Activated CD4-positive, alpha-beta memory T cell treated with anti-CD3 and anti-CD28 coated beads for 36 hours (primary cell): ENCODE measurements at regions of chr22 and their contacts with region 1.

Region 1: DNA sequence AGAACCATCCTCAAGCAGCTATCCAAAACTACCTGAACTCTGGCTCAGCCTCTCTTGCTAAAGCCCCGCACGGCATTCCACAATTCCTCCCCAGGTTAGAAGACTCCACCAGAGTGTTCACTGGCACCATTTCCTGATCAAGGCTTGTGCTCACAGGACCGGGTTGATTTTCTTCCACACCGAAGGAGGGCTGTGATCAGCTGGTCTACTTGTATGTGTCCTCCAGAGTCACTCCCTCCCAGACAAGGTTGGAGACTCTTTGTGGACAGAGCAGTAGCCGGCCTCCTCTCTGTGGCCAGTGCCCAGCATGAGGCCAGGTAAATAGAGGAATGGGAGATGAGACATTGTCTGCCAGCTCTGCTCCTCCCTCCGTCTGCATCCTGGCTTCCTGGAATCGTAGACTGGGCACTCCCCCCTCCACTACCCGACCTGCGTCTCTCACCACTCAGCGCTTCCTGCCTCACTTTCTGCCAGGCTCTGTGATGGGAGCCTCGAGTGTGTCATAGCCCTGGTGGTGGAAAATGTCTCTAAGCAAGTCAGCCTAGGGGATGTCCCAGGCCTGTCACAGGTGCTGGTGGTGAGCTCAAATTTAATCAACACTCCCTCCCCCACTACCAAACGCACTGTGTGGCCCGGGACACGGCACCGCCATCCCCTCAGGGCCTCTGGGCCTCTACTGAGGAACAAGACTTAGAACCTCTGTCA is 12.5 kb upstream of the TMPRSS6 start:
- DNase-seq: peak; percentile 97
- H3K4me3 Mint-ChIP-seq: peak overlapping the region; percentile 88
- H3K27ac Mint-ChIP-seq: peak overlapping the region; percentile 100
- H3K4me1 Mint-ChIP-seq: peaks cover 81% of the 10 kb centered on the region
- H3K27me3 Mint-ChIP-seq: no peaks in the 10 kb centered on the region

Region 2: GRCh38 chr22:37043828-37044538 is 78.1 kb before region 1 on chr22:
- CTCF ChIA-PET with region 1: interaction called, 16 read pairs
- POLR2A ChIA-PET with region 1: interaction called, 3 read pairs
- intact Hi-C with region 1: no loop called
- DNase-seq: peak; percentile 75
- H3K4me3 Mint-ChIP-seq: no peak overlapping the region
- H3K27ac Mint-ChIP-seq: no peak overlapping the region
- H3K4me1 Mint-ChIP-seq: peaks cover 25% of the 10 kb centered on the region
- H3K27me3 Mint-ChIP-seq: no peaks in the 10 kb centered on the region

Region 3: DNA sequence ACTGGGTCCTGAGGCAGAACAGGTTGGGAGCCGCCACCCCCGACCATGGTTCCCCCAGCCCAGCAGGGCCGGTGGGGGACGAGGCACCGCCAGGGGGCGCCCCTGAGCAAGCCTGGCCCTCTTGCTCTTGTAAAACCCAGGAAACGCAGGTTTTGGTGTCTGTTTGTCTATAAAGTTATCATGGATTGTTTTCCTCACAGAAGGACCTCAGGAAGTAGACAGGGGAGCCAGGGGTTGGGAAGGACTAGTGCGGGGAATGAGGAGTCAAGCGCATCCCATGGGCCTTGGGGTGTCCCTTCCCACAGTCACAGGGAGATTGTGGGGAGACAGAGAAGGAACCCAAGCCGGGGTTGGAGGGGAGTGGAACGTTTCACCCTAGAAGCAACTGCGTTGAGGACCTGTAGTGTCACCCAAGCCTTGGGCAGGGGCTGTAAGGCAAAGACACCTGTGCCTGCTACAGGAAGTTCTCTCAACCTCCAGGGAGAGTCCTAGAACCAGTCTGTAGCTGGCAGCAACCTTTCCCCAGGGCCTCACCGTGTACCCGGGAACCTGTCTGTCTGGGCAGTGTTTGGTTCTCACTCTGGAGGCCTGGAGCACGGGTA is 44.1 kb before region 1 on chr22:
- CTCF ChIA-PET with region 1: interaction called, 91 read pairs
- POLR2A ChIA-PET with region 1: interaction called, 99 read pairs
- intact Hi-C with region 1: loop called (anchors 1 kb)
- DNase-seq: peak; percentile 91
- H3K4me3 Mint-ChIP-seq: peak overlapping the region; percentile 49
- H3K27ac Mint-ChIP-seq: peak overlapping the region; percentile 91
- H3K4me1 Mint-ChIP-seq: peaks cover 52% of the 10 kb centered on the region
- H3K27me3 Mint-ChIP-seq: peaks cover 4% of the 10 kb centered on the region

Region 4: GRCh38 chr22:37139762-37140161 is 17.7 kb after region 1 on chr22:
- CTCF ChIA-PET with region 1: interaction called, 18 read pairs
- POLR2A ChIA-PET with region 1: interaction called, 139 read pairs
- intact Hi-C with region 1: loop called (anchors 1 kb)
- DNase-seq: peak; percentile 40
- H3K4me3 Mint-ChIP-seq: peak overlapping the region; percentile 25
- H3K27ac Mint-ChIP-seq: peak overlapping the region; percentile 98
- H3K4me1 Mint-ChIP-seq: peaks cover 78% of the 10 kb centered on the region
- H3K27me3 Mint-ChIP-seq: no peaks in the 10 kb centered on the region

Region 5: DNA sequence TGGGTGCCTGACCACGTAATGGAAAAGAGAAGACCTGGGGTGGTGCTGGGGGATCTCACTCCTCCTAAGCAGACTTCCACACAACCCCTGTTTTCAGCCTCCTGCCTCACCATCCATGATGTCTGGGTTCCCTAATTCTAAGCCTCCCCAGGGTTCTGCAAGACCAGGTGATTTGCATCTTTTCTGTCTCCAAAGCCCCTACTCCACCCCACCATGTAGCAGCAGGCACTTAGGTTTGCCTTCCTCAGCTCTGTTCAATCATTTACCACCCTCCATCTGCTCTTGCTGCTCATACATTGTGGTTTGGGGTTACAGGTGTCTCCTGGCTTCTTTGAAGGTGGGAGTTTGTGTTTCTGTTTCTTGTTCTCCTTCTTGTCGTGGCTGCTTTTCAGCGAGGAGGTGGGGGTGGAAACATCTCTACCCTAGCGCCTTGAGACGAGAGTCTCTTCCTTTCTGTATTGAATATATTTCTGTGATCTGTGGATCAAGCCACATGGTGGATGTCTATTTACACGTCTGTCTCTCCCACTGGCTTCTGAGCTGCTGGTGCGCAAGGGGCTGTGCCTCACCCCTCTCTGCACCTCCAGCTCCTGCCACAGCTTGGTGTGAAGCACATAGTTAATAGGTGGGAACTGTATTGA is 96.9 kb after region 1 on chr22:
- CTCF ChIA-PET with region 1: interaction called, 5 read pairs
- POLR2A ChIA-PET with region 1: interaction called, 4 read pairs
- intact Hi-C with region 1: loop called (anchors 1 kb)
- DNase-seq: peak; percentile 85
- H3K4me3 Mint-ChIP-seq: peak overlapping the region; percentile 76
- H3K27ac Mint-ChIP-seq: peak overlapping the region; percentile 95
- H3K4me1 Mint-ChIP-seq: peaks cover 76% of the 10 kb centered on the region
- H3K27me3 Mint-ChIP-seq: no peaks in the 10 kb centered on the region

Region 6: DNA sequence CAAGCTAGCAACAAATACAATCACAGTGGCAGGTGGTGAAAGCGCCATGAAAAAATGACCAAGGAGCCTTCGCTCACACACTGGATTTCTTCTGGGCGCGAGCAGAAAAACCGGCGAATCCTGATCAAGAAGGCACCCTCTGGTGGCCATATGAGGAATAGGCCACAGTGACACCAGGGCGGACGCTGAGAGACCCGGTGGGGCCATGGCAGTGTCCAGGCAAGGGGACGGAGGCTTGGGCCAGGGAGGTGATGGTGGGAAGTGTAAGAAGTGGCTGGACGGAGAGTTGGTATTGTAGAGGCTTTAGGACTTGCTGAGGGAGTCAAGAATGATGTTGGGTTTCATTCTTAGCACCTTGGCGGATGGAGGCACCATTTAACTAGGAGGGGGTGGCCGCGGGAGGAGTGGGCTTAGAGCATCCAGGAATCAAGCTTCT is 138.9 kb after region 1 on chr22:
- CTCF ChIA-PET with region 1: interaction called, 12 read pairs
- POLR2A ChIA-PET with region 1: no interaction called
- intact Hi-C with region 1: no loop called
- DNase-seq: peak; percentile 76
- H3K4me3 Mint-ChIP-seq: peak overlapping the region; percentile 17
- H3K27ac Mint-ChIP-seq: peak overlapping the region; percentile 65
- H3K4me1 Mint-ChIP-seq: peaks cover 20% of the 10 kb centered on the region
- H3K27me3 Mint-ChIP-seq: no peaks in the 10 kb centered on the region

Region 7: GRCh38 chr22:37462983-37463382 is 340.9 kb after region 1 on chr22:
- CTCF ChIA-PET with region 1: no interaction called
- POLR2A ChIA-PET with region 1: no interaction called
- intact Hi-C with region 1: no loop called
- DNase-seq: peak; percentile 22
- H3K4me3 Mint-ChIP-seq: no peak overlapping the region
- H3K27ac Mint-ChIP-seq: no peak overlapping the region
- H3K4me1 Mint-ChIP-seq: peaks cover 9% of the 10 kb centered on the region
- H3K27me3 Mint-ChIP-seq: no peaks in the 10 kb centered on the region